GM12878 (cell line): ENCODE measurements at regions of chr2 and their contacts with region 1.

Region 1: DNA sequence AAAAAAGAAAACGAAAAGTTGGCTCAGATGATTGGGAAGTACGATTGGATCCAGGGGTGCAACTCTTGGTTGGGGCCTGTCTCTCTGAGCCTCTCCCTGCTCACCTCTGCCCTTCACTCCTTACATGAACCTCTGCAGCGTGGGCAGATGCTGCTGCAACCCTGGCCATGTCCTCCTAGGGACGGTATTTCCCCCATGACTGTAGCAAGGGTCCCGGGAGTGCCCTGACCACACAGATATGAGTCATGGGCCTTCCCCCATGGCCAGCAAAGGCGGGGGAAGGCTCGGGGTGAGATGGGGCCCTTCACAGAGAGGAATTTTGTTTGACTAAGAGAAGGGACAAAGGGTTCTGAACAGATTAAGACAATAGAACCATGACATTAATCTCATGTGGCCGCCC is 129.0 kb downstream of the NCK2 start:
- DNase-seq: peak; percentile 71
- ATAC-seq: peak; percentile 97
- H3K4me3 ChIP-seq: no peak overlapping the region
- H3K27ac ChIP-seq: peak overlapping the region; percentile 63
- H3K4me1 ChIP-seq: peaks cover 27% of the 10 kb centered on the region
- H3K27me3 ChIP-seq: no peaks in the 10 kb centered on the region
- CTCF ChIP-seq: peak in 1 of 3 experiments; percentile 5; a peak in 1 of 6 replicates
- EP300 ChIP-seq: peak; percentile 70 to 92; a peak in 3 of 4 replicates
- POLR2A ChIP-seq: peak; percentile 52; the same call in 1 of the 2 replicates
- RAD21 ChIP-seq: peak; percentile 38; the same call in 1 of the 2 replicates

Region 2: GRCh38 chr2:105812180-105813044 is 61.3 kb before region 1 on chr2:
- CTCF ChIA-PET with region 1: interaction called, 5 read pairs
- POLR2A ChIA-PET with region 1: no interaction called
- RAD21 ChIA-PET with region 1: no interaction called
- SMC1A ChIA-PET with region 1: interaction called, 14 read pairs
- in situ Hi-C with region 1: no loop called
- intact Hi-C with region 1: no loop called
- DNase-seq: no peak
- ATAC-seq: peak; percentile 97
- H3K4me3 ChIP-seq: no peak overlapping the region
- H3K27ac ChIP-seq: peak overlapping the region; percentile 62
- H3K4me1 ChIP-seq: peaks cover 37% of the 10 kb centered on the region
- H3K27me3 ChIP-seq: no peaks in the 10 kb centered on the region
- CTCF ChIP-seq: no peak
- EP300 ChIP-seq: no peak
- POLR2A ChIP-seq: no peak
- RAD21 ChIP-seq: 0 out of 2 replicates have a peak, but pooled peaks have one; percentile 3

Region 3: GRCh38 chr2:105888625-105889400 is 15.1 kb after region 1 on chr2:
- CTCF ChIA-PET with region 1: interaction called, 5 read pairs
- POLR2A ChIA-PET with region 1: no interaction called
- RAD21 ChIA-PET with region 1: no interaction called
- SMC1A ChIA-PET with region 1: interaction called, 11 read pairs
- in situ Hi-C with region 1: no loop called
- intact Hi-C with region 1: no loop called
- DNase-seq: no peak
- ATAC-seq: peak; percentile 44; the same call in 2 of the 3 replicates
- H3K4me3 ChIP-seq: no peak overlapping the region
- H3K27ac ChIP-seq: no peak overlapping the region
- H3K4me1 ChIP-seq: peaks cover 5% of the 10 kb centered on the region
- H3K27me3 ChIP-seq: no peaks in the 10 kb centered on the region
- CTCF ChIP-seq: peak in 2 of 3 experiments; percentile 16 to 23; a peak in 1 of 6 replicates
- EP300 ChIP-seq: no peak
- POLR2A ChIP-seq: no peak
- RAD21 ChIP-seq: peak; percentile 20; the same call in 1 of the 2 replicates